Dendritic cell treated with granulocyte-macrophage colony-stimulating factor and Interleukin-4, amounts not matched to agents 40 ng/mL and 50 ng/mL, for 4 days (primary cell): ENCODE measurements at regions of chr7 and their contacts with region 1.

Region 1: GRCh38 chr7:150368884-150369747 is 494 bp downstream of the REPIN1 start:
- H3K4me3 Mint-ChIP-seq: peak overlapping the region; percentile 93
- H3K27ac Mint-ChIP-seq: peak overlapping the region; percentile 94
- H3K4me1 Mint-ChIP-seq: peaks cover 57% of the 10 kb centered on the region
- H3K27me3 Mint-ChIP-seq: no peaks in the 10 kb centered on the region

Region 2: DNA sequence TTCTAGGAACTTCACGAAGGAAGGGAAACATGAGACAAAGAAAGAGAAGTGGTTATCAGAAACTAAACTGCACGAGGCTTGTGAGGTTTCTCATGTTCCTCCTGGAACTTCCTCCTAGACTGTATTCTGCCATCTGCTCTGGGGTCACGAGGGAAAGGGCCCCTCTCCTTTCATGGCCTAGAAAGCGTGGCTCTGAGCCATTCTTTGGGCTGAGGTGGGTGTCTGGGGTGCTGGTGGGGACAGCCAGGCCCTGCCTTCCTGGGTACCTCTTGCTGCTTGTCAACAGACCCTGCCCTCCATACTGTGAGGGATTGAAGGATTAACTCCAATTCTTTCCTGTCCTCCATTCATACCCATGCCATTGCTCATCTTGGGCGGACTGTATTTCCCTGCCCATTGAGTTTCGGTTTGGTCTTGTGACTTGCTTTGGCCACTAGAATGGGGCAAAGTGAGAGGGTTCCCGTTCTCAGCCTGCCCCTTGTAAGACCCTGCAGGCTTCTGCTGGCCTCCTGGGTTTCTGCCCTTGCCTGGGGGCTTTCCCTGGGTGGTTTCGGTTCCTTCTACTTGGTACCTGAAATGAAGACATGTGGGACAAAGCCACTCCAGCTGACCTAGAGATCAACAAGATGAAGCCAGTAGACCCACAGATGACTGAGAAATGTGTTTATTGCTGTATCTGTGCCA is 66.4 kb after region 1 on chr7:
- intact Hi-C with region 1: loop called (anchors 2 kb)
- H3K4me3 Mint-ChIP-seq: no peak overlapping the region
- H3K27ac Mint-ChIP-seq: peak overlapping the region; percentile 84
- H3K4me1 Mint-ChIP-seq: peaks cover 57% of the 10 kb centered on the region
- H3K27me3 Mint-ChIP-seq: peaks cover 60% of the 10 kb centered on the region